ENCODE measurements at regions of chr2 and their contacts with region 1.

Region 1: GRCh38 chr2:138787053-138787666 is 7.0 kb upstream of the NXPH2 start:
- DNase-seq: peak; percentile 52
- H3K4me3 ChIP-seq: no peak overlapping the region
- H3K27ac ChIP-seq: no peak overlapping the region
- H3K4me1 ChIP-seq: no peaks in the 10 kb centered on the region
- H3K27me3 ChIP-seq: peaks cover 9 to 11% of the 10 kb centered on the region in 2 experiments
- CTCF ChIP-seq: peak; percentile 32 to 47
- POLR2A ChIP-seq: no peak

Region 2: GRCh38 chr2:137865954-137866540 is 921.1 kb before region 1 on chr2:
- CTCF ChIA-PET with region 1: interaction called, 48 read pairs
- POLR2A ChIA-PET with region 1: no interaction called
- dilution Hi-C with region 1: no loop called
- intact Hi-C with region 1: loop called (anchors 1 kb)
- DNase-seq: peak; percentile 53
- H3K4me3 ChIP-seq: no peak overlapping the region
- H3K27ac ChIP-seq: no peak overlapping the region
- H3K4me1 ChIP-seq: no peaks in the 10 kb centered on the region
- H3K27me3 ChIP-seq: peaks cover 0 to 3% of the 10 kb centered on the region in 2 experiments
- CTCF ChIP-seq: peak; percentile 57 to 63
- POLR2A ChIP-seq: no peak

Region 3: DNA sequence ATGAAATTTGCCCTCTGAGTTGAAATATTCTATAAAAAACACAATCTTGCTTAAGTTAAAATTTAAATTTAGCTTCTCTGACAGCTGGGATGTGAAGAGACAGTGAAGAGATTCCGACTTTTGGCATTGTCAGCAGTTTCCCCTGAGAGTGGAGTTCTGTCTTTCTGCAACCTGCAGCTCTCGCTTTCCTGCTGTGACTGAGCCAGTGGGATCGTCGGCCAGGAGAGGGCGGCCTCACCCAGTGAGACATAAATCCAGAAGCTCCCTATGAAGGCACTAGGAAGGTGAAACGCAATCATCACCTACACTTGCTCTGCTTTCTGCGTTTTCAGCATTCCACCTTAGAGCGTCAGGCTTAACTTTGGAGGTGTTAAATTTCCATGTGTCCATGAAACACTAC is 898.3 kb before region 1 on chr2:
- CTCF ChIA-PET with region 1: interaction called, 60 read pairs
- POLR2A ChIA-PET with region 1: no interaction called
- dilution Hi-C with region 1: no loop called
- intact Hi-C with region 1: loop called (anchors 1 kb)
- DNase-seq: peak; percentile 31
- H3K4me3 ChIP-seq: no peak overlapping the region
- H3K27ac ChIP-seq: no peak overlapping the region
- H3K4me1 ChIP-seq: no peaks in the 10 kb centered on the region
- H3K27me3 ChIP-seq: no peaks in the 10 kb centered on the region
- CTCF ChIP-seq: peak; percentile 23 to 67
- POLR2A ChIP-seq: no peak

Region 4: GRCh38 chr2:137910641-137911040 is 876.5 kb before region 1 on chr2:
- CTCF ChIA-PET with region 1: interaction called, 48 read pairs
- POLR2A ChIA-PET with region 1: no interaction called
- dilution Hi-C with region 1: no loop called
- intact Hi-C with region 1: loop called (anchors 1 kb)
- DNase-seq: peak; percentile 52
- H3K4me3 ChIP-seq: no peak overlapping the region
- H3K27ac ChIP-seq: no peak overlapping the region
- H3K4me1 ChIP-seq: peaks cover 4% of the 10 kb centered on the region
- H3K27me3 ChIP-seq: peaks cover 0 to 3% of the 10 kb centered on the region in 2 experiments
- CTCF ChIP-seq: peak; percentile 26
- POLR2A ChIP-seq: no peak

Region 5: DNA sequence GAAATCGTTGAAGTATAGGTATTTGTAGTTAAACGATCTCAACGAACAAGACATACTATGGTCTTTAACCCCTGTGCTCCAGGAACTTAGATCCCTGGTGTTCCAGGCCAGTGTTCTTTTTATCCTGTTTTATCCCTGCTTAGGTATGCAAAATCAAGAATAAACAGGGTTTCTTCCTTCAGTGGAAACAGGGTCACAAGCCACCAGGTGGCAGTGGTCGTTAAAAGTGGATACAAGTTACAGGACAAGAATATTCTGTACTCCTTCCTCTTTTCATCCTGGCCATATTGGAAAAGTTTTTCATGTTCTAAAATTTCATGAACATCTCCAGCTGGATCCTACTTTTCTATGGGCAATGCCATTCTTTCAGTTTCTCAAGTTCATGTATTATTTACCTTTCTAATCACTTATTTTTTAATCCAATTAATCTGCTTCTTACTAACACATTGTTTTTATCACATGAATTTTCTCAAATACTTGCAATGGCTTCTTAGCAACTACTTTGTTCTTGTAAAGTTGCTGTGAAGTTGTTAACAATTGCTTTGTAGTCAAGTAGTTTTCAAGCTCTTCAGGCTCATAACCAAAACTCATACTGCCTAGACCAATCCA is 839.3 kb before region 1 on chr2:
- CTCF ChIA-PET with region 1: interaction called, 9 read pairs
- POLR2A ChIA-PET with region 1: no interaction called
- dilution Hi-C with region 1: no loop called
- intact Hi-C with region 1: loop called (anchors 1 kb)
- DNase-seq: peak; percentile 82
- H3K4me3 ChIP-seq: no peak overlapping the region
- H3K27ac ChIP-seq: no peak overlapping the region
- H3K4me1 ChIP-seq: no peaks in the 10 kb centered on the region
- H3K27me3 ChIP-seq: no peaks in the 10 kb centered on the region
- CTCF ChIP-seq: peak; percentile 45 to 62
- POLR2A ChIP-seq: no peak

Region 6: DNA sequence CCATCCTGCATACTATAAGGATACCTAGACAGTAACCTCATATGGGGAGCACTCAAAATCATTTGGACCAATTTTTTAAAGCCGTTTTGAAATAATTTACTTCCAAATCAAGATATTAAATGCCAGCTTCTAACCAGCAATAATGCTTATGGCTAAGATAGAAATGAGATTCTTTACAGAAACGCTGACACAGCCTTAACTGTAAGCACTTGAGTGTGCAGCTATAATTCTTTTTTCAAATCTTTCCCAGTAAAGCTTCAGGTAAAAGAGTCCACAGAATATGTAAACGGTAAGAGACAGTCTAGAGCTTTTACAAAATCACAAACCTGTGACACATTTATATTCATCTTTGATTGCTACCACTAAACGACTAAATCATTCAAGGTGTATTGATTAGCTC is 11.4 kb before region 1 on chr2:
- CTCF ChIA-PET with region 1: interaction called, 11 read pairs
- POLR2A ChIA-PET with region 1: no interaction called
- dilution Hi-C with region 1: no loop called
- intact Hi-C with region 1: no loop called
- DNase-seq: no peak
- H3K4me3 ChIP-seq: no peak overlapping the region
- H3K27ac ChIP-seq: no peak overlapping the region
- H3K4me1 ChIP-seq: no peaks in the 10 kb centered on the region
- H3K27me3 ChIP-seq: peaks cover 19 to 25% of the 10 kb centered on the region in 2 experiments
- CTCF ChIP-seq: no peak
- POLR2A ChIP-seq: no peak

Region 7: GRCh38 chr2:138997849-138998517 is 210.8 kb after region 1 on chr2:
- CTCF ChIA-PET with region 1: no interaction called
- POLR2A ChIA-PET with region 1: no interaction called
- dilution Hi-C with region 1: no loop called
- intact Hi-C with region 1: no loop called
- DNase-seq: no peak
- H3K4me3 ChIP-seq: no peak overlapping the region
- H3K27ac ChIP-seq: no peak overlapping the region
- H3K4me1 ChIP-seq: no peaks in the 10 kb centered on the region
- H3K27me3 ChIP-seq: no peaks in the 10 kb centered on the region
- CTCF ChIP-seq: no peak
- POLR2A ChIP-seq: no peak